Endothelial cell of umbilical vein (primary cell): ENCODE measurements at regions of chr6 and their contacts with region 1.

Region 1: GRCh38 chr6:7178280-7178679 is 70.5 kb downstream of the RREB1 start:
- DNase-seq: no peak
- H3K4me3 ChIP-seq: no peak overlapping the region
- H3K27ac ChIP-seq: no peak overlapping the region
- H3K4me1 ChIP-seq: no peaks in the 10 kb centered on the region
- H3K27me3 ChIP-seq: no peaks in the 10 kb centered on the region
- CTCF ChIP-seq: no peak
- POLR2A ChIP-seq: no peak

Region 2: GRCh38 chr6:7198833-7199800 is 20.8 kb after region 1 on chr6:
- CTCF ChIA-PET with region 1: no interaction called
- POLR2A ChIA-PET with region 1: no interaction called
- dilution Hi-C with region 1: no loop called
- intact Hi-C with region 1: loop called (anchors 2 kb)
- DNase-seq: no peak
- H3K4me3 ChIP-seq: no peak overlapping the region
- H3K27ac ChIP-seq: no peak overlapping the region
- H3K4me1 ChIP-seq: no peaks in the 10 kb centered on the region
- H3K27me3 ChIP-seq: no peaks in the 10 kb centered on the region
- CTCF ChIP-seq: no peak
- POLR2A ChIP-seq: no peak